OCI-LY7 (cell line): ENCODE measurements at regions of chr2 and their contacts with region 1.

Region 1: GRCh38 chr2:218269899-218270720 is at the starts of genes AAMP and PNKD:
- DNase-seq: peak; percentile 100
- H3K4me3 ChIP-seq: peak within 1 kb of the TSS; percentile 97
- H3K27ac ChIP-seq: peak within 1 kb of the TSS; percentile 44
- H3K4me1 ChIP-seq: peaks cover 23% of the 10 kb centered on the region
- CTCF ChIP-seq: 0 out of 2 replicates have a peak, but pooled peaks have one; percentile 24
- total RNA-seq, gene AAMP: 97.0 and 136 TPM in 2 replicates
- total RNA-seq, gene PNKD: 65.9 and 66.3 TPM in 2 replicates

Region 2: GRCh38 chr2:218168635-218169462 is 101.3 kb before region 1 on chr2:
- CTCF ChIA-PET with region 1: no interaction called
- POLR2A ChIA-PET with region 1: interaction called, 3 read pairs
- intact Hi-C with region 1: loop called (anchors 5 kb)
- DNase-seq: peak; percentile 76
- H3K4me3 ChIP-seq: no peak overlapping the region
- H3K27ac ChIP-seq: no peak overlapping the region
- H3K4me1 ChIP-seq: no peaks in the 10 kb centered on the region
- CTCF ChIP-seq: peak; percentile 96

Region 3: DNA sequence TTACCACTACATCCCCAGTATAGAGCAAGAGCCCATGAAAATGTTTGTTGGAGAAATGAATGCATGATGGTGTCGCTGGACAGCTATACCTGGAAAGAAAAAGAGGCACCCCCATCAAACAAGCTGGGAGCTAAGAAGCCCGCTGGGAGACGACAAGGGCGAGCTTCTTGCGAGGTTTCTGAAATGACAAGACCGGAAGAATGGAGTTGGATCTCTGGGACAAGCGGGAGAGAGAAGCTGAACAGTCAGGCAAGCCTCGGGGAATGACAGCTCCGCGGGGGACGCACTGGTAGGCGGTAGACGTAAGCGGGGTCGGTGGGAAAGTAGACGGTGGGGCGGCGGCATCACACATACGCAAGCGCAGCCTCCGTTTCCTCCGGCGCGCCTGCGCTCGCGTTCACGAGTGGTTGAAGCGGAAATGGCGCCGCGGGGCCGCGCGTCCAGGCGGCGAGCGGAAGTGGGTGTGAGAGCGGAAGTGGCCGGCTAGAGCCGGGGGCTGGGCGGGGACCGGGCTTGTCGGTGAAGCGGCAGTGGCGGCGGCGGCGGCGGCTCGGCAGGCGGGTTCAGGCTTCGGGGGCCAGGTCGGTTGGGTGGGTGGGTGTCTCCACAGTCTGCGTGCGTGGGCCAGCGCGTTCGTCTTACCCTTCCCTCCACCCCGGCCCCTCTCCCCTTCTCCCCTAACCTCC is 53.3 kb before region 1 on chr2 and contains the start of gene ARPC2:
- CTCF ChIA-PET with region 1: no interaction called
- POLR2A ChIA-PET with region 1: interaction called, 5 read pairs
- intact Hi-C with region 1: loop called (anchors 2 kb)
- DNase-seq: peak; percentile 97
- H3K4me3 ChIP-seq: peak within 1 kb of the TSS; percentile 90
- H3K27ac ChIP-seq: peak within 1 kb of the TSS; percentile 92
- H3K4me1 ChIP-seq: peaks cover 32% of the 10 kb centered on the region
- CTCF ChIP-seq: no peak
- total RNA-seq, gene ARPC2: 257 and 264 TPM in 2 replicates

Region 4: GRCh38 chr2:218292048-218293014 is 22.2 kb after region 1 on chr2 and contains the start of gene TMBIM1:
- CTCF ChIA-PET with region 1: interaction called, 17 read pairs
- POLR2A ChIA-PET with region 1: interaction called, 35 read pairs
- intact Hi-C with region 1: loop called (anchors 1 kb)
- DNase-seq: peak; percentile 86
- H3K4me3 ChIP-seq: peak within 1 kb of the TSS; percentile 89
- H3K27ac ChIP-seq: peak within 1 kb of the TSS; percentile 91
- H3K4me1 ChIP-seq: peaks cover 66% of the 10 kb centered on the region
- CTCF ChIP-seq: peak; percentile 93
- total RNA-seq, gene TMBIM1: 18.9 and 30.3 TPM in 2 replicates

Region 5: DNA sequence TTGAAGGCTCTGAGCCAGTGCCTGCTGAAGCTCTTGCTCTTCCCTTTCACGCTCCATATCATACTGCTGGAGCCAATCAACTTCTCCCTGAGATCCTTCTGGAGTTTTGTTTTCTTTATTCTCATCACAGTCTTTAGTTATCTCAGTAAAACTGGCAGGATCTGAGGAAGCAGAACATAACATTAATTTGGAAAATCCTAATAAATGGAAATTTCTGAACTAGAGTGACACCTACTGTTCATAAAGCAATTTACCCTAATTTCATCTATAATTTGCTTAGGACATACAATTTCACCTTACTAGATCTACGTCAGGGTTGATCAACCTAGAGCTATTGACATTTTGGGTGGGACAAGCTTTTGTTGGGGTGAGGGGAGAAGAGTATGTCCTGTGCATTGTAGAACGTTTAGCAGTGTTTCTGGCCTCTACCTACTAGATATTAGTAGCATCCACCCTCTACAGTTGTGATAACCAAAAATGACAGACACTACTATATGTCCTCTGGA is 196.0 kb after region 1 on chr2:
- CTCF ChIA-PET with region 1: no interaction called
- POLR2A ChIA-PET with region 1: no interaction called
- intact Hi-C with region 1: loop called (anchors 5 kb)
- DNase-seq: peak; percentile 24
- H3K4me3 ChIP-seq: no peak overlapping the region
- H3K27ac ChIP-seq: no peak overlapping the region
- H3K4me1 ChIP-seq: peaks cover 6% of the 10 kb centered on the region
- CTCF ChIP-seq: peak; percentile 87

Region 6: GRCh38 chr2:218648088-218648786 is 378.1 kb after region 1 on chr2:
- CTCF ChIA-PET with region 1: no interaction called
- POLR2A ChIA-PET with region 1: no interaction called
- intact Hi-C with region 1: loop called (anchors 5 kb)
- DNase-seq: peak; percentile 67
- H3K4me3 ChIP-seq: no peak overlapping the region
- H3K27ac ChIP-seq: no peak overlapping the region
- H3K4me1 ChIP-seq: no peaks in the 10 kb centered on the region
- CTCF ChIP-seq: peak; percentile 96